CD14-positive monocyte (primary cell): ENCODE measurements at regions of chrX and their contacts with region 1.

Region 1: DNA sequence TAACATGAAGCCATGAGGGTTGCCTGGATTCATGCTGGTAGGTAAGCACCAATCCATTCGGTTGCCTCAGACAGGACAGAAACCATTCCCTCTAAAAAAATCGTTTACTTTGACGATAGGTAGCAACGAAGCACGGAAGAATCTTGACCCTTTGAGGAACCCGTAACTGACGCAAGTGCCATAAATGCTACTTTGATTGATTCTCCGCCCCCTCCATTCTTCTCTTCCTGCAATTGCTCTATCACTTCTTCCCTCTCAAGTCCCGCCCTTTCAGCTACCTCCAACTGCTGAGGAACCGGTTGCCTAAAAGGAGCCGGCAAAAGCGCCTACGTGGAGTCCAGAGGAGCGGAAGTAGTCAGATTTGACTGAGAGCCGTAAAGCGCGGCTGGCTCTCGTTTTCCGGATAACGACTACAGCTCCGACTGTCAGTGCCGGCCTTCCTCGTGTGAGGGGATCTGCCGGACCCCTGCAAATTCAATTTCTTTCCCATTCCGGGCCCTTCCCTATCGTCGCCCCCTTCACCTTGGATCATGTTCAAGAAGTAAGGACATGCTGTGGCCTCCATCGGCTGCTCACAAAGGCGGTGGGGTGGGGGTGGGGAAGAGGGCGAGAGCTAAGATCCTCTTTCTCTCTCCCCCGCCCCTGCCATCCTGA is at the start of gene MCTS1:
- DNase-seq: peak; percentile 68 to 84 (median 71)
- H3K4me3 ChIP-seq: peak within 1 kb of the TSS; percentile 73 to 83 (median 80)
- H3K4me3 Mint-ChIP-seq: peak within 1 kb of the TSS; percentile 87 to 94
- H3K27ac ChIP-seq: peak within 1 kb of the TSS; percentile 93 to 98
- H3K27ac Mint-ChIP-seq: peak within 1 kb of the TSS; percentile 96 to 99 (median 98)
- H3K4me1 ChIP-seq: peaks cover 7 to 11% of the 10 kb centered on the region in 2 donors
- H3K4me1 Mint-ChIP-seq: peaks cover 5% of the 10 kb centered on the region
- H3K27me3 ChIP-seq: no peaks in the 10 kb centered on the region
- H3K27me3 Mint-ChIP-seq: peaks cover 1 to 4% (median 1%) of the 10 kb centered on the region in 3 donors
- CTCF ChIP-seq: no peak
- polyA plus RNA-seq, gene MCTS1: 25.0 to 85.1 (median 74.6) TPM

Region 2: DNA sequence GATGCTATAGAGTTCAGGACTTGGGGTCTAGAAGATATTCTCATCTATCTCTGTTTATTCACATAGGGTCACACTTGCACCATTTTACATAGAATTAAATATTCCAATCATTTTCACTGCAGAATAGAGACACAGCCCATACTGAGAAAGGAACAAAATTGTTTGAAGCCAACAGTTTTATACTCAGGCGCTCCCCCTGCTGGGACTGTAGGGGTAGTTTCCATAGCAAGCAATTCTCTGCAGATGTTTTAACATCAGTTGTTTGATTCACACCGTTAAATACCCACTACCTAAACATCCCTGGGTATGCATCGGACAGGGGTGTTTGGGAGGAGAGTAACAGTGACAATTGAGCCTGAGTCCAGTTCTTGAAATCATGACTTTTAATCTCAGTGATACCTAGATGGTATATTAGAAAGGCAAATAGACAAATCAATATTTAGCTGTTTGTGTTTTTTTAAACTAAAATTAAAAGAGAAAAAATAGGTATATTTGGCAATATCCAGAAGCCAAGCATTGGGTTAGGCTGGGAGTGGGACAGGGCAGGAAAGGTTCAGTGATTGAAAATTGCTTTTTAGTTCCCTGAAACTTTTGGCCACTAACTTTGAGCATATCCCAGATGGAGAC is 1595.6 kb before region 1 on chrX:
- intact Hi-C with region 1: no loop called
- DNase-seq: peak; percentile 13 to 24 (median 15)
- H3K4me3 ChIP-seq: no peak overlapping the region
- H3K4me3 Mint-ChIP-seq: no peak overlapping the region
- H3K27ac ChIP-seq: no peak overlapping the region
- H3K27ac Mint-ChIP-seq: no peak overlapping the region
- H3K4me1 ChIP-seq: no peaks in the 10 kb centered on the region
- H3K4me1 Mint-ChIP-seq: no peaks in the 10 kb centered on the region
- H3K27me3 ChIP-seq: no peaks in the 10 kb centered on the region
- H3K27me3 Mint-ChIP-seq: peaks cover 0 to 4% (median 0%) of the 10 kb centered on the region in 3 donors
- CTCF ChIP-seq: peak; percentile 63

Region 3: GRCh38 chrX:120629667-120630537 is 26.1 kb after region 1 on chrX and contains the start of gene C1GALT1C1:
- intact Hi-C with region 1: loop called in 1 of 2 experiments (anchors 2 kb)
- DNase-seq: peak; percentile 87 to 90 (median 87)
- H3K4me3 ChIP-seq: peak within 1 kb of the TSS; percentile 80 to 85 (median 83)
- H3K4me3 Mint-ChIP-seq: peak within 1 kb of the TSS; percentile 90 to 94
- H3K27ac ChIP-seq: peak within 1 kb of the TSS; percentile 89 to 98
- H3K27ac Mint-ChIP-seq: peak within 1 kb of the TSS; percentile 92 to 98 (median 96)
- H3K4me1 ChIP-seq: peaks cover 8 to 16% of the 10 kb centered on the region in 2 donors
- H3K4me1 Mint-ChIP-seq: peaks cover 10% of the 10 kb centered on the region
- H3K27me3 ChIP-seq: no peaks in the 10 kb centered on the region
- H3K27me3 Mint-ChIP-seq: peaks cover 0 to 2% (median 0%) of the 10 kb centered on the region in 3 donors
- CTCF ChIP-seq: no peak
- polyA plus RNA-seq, gene C1GALT1C1: 8.3 to 44.3 (median 42.1) TPM